Activated CD4-positive, alpha-beta T cell treated with anti-CD3 and anti-CD28 coated beads for 36 hours (primary cell): ENCODE measurements at regions of chr14 and their contacts with region 1.

Region 1: DNA sequence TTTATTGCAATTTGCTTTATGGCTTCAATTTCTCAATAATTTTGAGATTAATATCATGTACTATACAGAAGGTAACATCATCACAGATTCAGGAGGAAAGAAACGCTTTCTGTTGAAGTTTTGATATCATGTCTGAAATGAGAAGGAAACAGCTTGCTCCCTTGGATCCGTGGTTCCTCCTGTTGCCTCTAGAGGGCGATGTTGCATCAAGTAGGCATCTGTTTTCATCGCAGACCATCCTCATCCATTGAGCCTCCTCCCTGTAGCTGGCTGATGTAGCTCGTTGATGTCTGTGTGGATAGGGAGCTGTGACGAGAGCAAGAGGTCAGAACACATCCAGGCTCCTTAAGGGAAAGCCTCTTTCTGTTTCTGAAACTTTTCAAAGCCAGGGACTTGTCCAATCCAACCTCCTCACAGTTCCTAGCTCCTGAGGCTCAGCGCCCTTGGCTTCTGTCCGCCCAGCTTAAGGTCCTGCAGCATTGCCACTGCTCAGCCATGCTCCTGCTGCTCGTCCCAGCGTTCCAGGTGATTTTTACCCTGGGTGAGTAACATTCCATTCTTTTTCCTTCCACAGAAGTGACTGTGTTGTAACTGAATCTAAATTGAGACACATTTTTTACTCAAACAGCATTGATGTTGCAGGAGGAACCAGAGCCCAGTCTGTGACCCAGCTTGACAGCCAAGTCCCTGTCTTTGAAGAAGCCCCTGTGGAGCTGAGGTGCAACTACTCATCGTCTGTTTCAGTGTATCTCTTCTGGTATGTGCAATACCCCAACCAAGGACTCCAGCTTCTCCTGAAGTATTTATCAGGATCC is 304.8 kb upstream of the OR4E1 start:
- DNase-seq: peak; percentile 78
- ATAC-seq: peak; percentile 79
- H3K4me3 Mint-ChIP-seq: peak overlapping the region; percentile 70
- H3K27ac Mint-ChIP-seq: peak overlapping the region; percentile 78
- H3K4me1 Mint-ChIP-seq: peaks cover 15% of the 10 kb centered on the region
- H3K27me3 Mint-ChIP-seq: no peaks in the 10 kb centered on the region

Region 2: GRCh38 chr14:21852061-21852664 is 126.2 kb before region 1 on chr14:
- CTCF ChIA-PET with region 1: interaction called, 10 read pairs
- POLR2A ChIA-PET with region 1: no interaction called
- intact Hi-C with region 1: no loop called
- DNase-seq: peak; percentile 87
- ATAC-seq: peak; percentile 73
- H3K4me3 Mint-ChIP-seq: peak overlapping the region; percentile 69
- H3K27ac Mint-ChIP-seq: peak overlapping the region; percentile 81
- H3K4me1 Mint-ChIP-seq: peaks cover 14% of the 10 kb centered on the region
- H3K27me3 Mint-ChIP-seq: peaks cover 8% of the 10 kb centered on the region

Region 3: GRCh38 chr14:21940887-21941856 is 37.2 kb before region 1 on chr14:
- CTCF ChIA-PET with region 1: interaction called, 13 read pairs
- POLR2A ChIA-PET with region 1: no interaction called
- intact Hi-C with region 1: no loop called
- DNase-seq: peak; percentile 34
- ATAC-seq: peak; percentile 78
- H3K4me3 Mint-ChIP-seq: peak overlapping the region; percentile 68
- H3K27ac Mint-ChIP-seq: peak overlapping the region; percentile 89
- H3K4me1 Mint-ChIP-seq: peaks cover 20% of the 10 kb centered on the region
- H3K27me3 Mint-ChIP-seq: no peaks in the 10 kb centered on the region

Region 4: DNA sequence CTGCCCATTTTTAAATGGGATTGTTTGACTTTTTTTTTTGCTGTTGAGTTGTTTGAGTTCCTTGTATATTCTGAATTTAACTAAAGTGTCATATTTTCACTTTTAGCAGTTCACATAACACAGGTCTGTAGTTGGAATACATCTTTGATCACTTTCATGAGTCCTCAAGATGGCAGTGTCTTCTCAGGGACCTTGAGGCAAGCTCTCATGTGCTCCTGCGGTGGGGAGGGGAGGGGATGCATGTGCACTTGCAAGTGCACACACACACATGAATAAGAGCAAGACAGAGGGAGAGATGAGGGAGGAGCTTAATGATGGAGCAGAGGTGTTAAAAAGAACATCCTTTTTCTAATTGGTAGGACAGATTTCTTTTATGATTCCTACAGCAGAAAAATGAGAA is 13.3 kb before region 1 on chr14:
- CTCF ChIA-PET with region 1: interaction called, 24 read pairs
- POLR2A ChIA-PET with region 1: no interaction called
- intact Hi-C with region 1: no loop called
- DNase-seq: peak; percentile 75
- ATAC-seq: peak; percentile 96
- H3K4me3 Mint-ChIP-seq: peak overlapping the region; percentile 32
- H3K27ac Mint-ChIP-seq: peak overlapping the region; percentile 87
- H3K4me1 Mint-ChIP-seq: peaks cover 20% of the 10 kb centered on the region
- H3K27me3 Mint-ChIP-seq: no peaks in the 10 kb centered on the region

Region 5: DNA sequence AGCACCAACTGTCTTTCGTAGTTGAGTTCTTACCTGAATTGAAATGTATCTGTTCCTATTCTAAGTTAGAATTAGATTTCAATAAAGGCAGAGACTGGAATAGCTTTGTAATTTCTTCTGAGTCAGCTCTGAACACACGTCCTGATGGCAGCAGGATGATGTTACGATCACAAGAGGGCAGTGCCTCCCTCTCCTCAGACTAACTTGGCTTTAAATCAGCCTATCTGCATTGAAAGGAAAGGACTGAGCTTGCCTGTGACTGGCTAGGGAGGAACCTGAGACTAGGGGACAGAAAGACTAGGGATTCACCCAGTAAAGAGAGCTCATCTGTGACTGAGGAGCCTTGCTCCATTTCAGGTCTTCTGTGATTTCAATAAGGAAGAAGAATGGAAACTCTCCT is 18.9 kb after region 1 on chr14:
- CTCF ChIA-PET with region 1: interaction called, 17 read pairs
- POLR2A ChIA-PET with region 1: no interaction called
- intact Hi-C with region 1: loop called in 1 of 2 experiments (anchors 2 kb)
- DNase-seq: peak; percentile 54
- ATAC-seq: peak; percentile 93
- H3K4me3 Mint-ChIP-seq: peak overlapping the region; percentile 85
- H3K27ac Mint-ChIP-seq: peak overlapping the region; percentile 96
- H3K4me1 Mint-ChIP-seq: peaks cover 27% of the 10 kb centered on the region
- H3K27me3 Mint-ChIP-seq: no peaks in the 10 kb centered on the region

Region 6: GRCh38 chr14:22002860-22003309 is 24.5 kb after region 1 on chr14:
- CTCF ChIA-PET with region 1: interaction called, 17 read pairs
- POLR2A ChIA-PET with region 1: no interaction called
- intact Hi-C with region 1: loop called in 1 of 2 experiments (anchors 2 kb)
- DNase-seq: peak; percentile 87
- ATAC-seq: peak; percentile 80
- H3K4me3 Mint-ChIP-seq: peak overlapping the region; percentile 80
- H3K27ac Mint-ChIP-seq: peak overlapping the region; percentile 83
- H3K4me1 Mint-ChIP-seq: peaks cover 26% of the 10 kb centered on the region
- H3K27me3 Mint-ChIP-seq: no peaks in the 10 kb centered on the region

Region 7: DNA sequence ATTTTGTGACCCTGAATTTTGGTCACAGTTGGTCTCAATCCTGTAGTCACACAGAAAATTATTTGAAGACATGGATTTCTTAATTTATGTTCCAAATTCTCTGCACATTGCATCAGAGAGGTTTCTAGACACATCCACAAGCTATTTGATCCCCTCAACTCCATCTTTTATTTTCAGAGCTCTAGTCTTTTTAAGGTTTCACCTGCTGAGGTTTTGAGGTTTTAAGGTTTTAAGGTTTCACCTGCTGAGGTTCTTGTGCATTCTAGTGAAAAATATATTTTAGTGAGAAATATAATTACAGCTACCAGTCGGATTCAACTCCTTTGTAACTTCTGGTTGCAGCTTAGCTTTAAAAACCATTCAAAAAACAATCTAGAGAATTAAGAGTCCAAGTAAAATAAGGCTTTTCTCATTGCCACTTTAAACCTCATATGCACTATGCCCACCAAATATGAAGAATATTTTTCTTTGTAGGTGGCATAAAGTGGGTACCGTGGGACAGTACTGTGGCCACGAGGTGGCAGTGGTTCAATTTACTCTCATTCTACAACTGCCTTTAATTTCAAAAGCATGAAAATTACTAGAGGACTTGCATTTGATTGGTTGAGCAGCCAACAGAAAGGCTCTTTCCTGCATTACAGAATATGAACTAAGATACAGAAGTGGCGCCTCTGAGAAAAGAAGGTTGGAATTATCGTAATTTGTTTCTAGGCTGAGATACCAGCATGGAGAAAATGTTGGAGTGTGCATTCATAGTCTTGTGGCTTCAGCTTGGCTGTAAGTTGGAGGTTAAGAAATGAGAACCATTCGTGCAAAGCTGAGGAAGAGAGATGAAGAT is 61.8 kb after region 1 on chr14:
- CTCF ChIA-PET with region 1: interaction called, 10 read pairs
- POLR2A ChIA-PET with region 1: no interaction called
- intact Hi-C with region 1: no loop called
- DNase-seq: peak; percentile 70
- ATAC-seq: peak; percentile 94
- H3K4me3 Mint-ChIP-seq: peak overlapping the region; percentile 73
- H3K27ac Mint-ChIP-seq: peak overlapping the region; percentile 70
- H3K4me1 Mint-ChIP-seq: peaks cover 12% of the 10 kb centered on the region
- H3K27me3 Mint-ChIP-seq: no peaks in the 10 kb centered on the region